ENCODE measurements at regions of chr1 and their contacts with region 1.

Region 1: GRCh38 chr1:84478876-84479868 is at the start of gene RPF1:
- DNase-seq: peak; percentile 83
- H3K4me3 Mint-ChIP-seq: peak within 1 kb of the TSS; percentile 88
- H3K27ac Mint-ChIP-seq: peak within 1 kb of the TSS; percentile 95
- H3K4me1 Mint-ChIP-seq: peaks cover 21% of the 10 kb centered on the region
- H3K27me3 Mint-ChIP-seq: no peaks in the 10 kb centered on the region
- CTCF ChIP-seq: no peak
- total RNA-seq, gene RPF1: 36.0 and 43.1 TPM in 2 replicates

Region 2: GRCh38 chr1:84492726-84493125 is 13.6 kb after region 1 on chr1:
- CTCF ChIA-PET with region 1: interaction called, 4 read pairs
- POLR2A ChIA-PET with region 1: interaction called, 24 read pairs
- intact Hi-C with region 1: no loop called
- DNase-seq: no peak
- H3K4me3 Mint-ChIP-seq: no peak overlapping the region
- H3K27ac Mint-ChIP-seq: no peak overlapping the region
- H3K4me1 Mint-ChIP-seq: no peaks in the 10 kb centered on the region
- H3K27me3 Mint-ChIP-seq: no peaks in the 10 kb centered on the region
- CTCF ChIP-seq: no peak

Region 3: DNA sequence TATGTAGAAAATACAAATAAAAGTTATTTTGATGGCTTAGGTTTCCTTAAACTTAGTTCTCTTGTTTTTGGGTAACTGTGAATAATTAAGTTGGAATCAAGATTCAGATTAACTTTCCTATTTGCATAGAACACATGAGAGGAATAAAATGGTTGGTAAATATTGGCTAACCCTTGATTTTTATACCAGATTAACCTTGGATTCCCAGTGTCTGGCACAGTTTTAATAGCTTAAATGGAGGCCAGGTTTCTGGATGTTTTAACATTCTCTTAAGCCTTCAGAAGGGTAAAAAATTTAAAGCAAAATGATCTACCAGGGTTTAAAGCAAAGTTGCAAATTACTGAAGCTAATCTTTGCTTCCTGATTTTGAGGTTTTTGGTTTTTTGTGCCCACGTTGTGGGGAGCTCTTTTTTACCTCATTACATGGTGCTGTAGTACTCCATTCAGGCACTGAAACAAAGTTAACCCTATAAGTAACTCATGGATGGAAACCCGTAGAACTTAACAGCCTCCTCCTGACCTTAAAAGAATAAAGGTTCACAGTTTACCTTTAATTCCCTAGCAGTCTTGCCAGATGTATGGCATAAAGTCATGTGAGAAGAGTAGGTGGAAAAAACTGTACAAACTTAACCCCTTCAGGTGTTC is 18.6 kb after region 1 on chr1:
- CTCF ChIA-PET with region 1: interaction called, 3 read pairs
- POLR2A ChIA-PET with region 1: interaction called, 12 read pairs
- intact Hi-C with region 1: no loop called
- DNase-seq: no peak
- H3K4me3 Mint-ChIP-seq: no peak overlapping the region
- H3K27ac Mint-ChIP-seq: no peak overlapping the region
- H3K4me1 Mint-ChIP-seq: peaks cover 15% of the 10 kb centered on the region
- H3K27me3 Mint-ChIP-seq: no peaks in the 10 kb centered on the region
- CTCF ChIP-seq: no peak